ENCODE measurements at regions of chr7 and their contacts with region 1.

Region 1: GRCh38 chr7:115356139-115356746 is 434.3 kb downstream of the MDFIC start:
- H3K4me3 ChIP-seq: no peak overlapping the region
- H3K27ac ChIP-seq: no peak overlapping the region
- H3K4me1 ChIP-seq: no peaks in the 10 kb centered on the region
- CTCF ChIP-seq: no peak

Region 2: DNA sequence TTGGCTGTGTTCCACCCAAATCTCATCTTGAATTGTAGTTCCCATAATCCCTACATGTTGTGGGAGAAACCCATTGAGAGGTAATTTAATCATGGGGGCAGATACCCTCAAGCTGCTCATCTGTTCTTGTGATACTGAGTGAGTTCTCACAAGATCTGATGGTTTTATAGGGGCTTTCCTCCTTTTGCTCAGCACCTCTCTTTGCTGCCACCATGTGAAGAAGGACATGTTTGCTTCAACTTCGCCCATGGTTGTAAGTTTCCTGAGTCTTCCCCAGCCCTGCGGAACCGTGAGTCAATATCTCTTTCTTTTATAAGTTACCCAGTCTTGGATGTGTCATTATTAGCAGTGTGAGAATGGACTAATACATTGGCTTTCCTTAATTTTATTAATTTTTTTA is 93.4 kb after region 1 on chr7:
- CTCF ChIA-PET with region 1: no interaction called
- POLR2A ChIA-PET with region 1: no interaction called
- H3K4me3 ChIP-seq: no peak overlapping the region
- H3K27ac ChIP-seq: no peak overlapping the region
- H3K4me1 ChIP-seq: no peaks in the 10 kb centered on the region
- CTCF ChIP-seq: no peak

Region 3: DNA sequence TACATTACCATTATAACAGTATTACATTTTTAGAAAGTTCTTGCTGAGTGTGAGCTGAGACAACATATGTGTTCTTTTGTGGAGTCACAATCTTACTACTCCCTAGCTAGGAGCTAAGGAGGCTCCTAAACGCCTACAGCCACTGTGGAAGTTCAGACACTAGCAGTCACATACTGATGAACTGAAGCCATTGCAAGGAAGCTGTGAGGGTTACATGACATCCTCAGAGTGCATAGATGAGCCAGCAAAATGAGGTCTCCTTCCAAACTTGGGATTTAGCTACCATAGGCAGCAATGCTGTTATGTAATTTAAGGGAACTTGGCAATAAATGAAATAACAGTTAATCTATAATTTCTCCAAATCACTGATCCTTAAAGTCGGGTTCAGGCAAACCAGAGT is 1586.3 kb after region 1 on chr7:
- CTCF ChIA-PET with region 1: interaction called, 10 read pairs
- POLR2A ChIA-PET with region 1: no interaction called
- H3K4me3 ChIP-seq: no peak overlapping the region
- H3K27ac ChIP-seq: no peak overlapping the region
- H3K4me1 ChIP-seq: no peaks in the 10 kb centered on the region
- CTCF ChIP-seq: no peak

Measured in HEK293 (cell line).